Transverse colon (tissue), 4 donors: ENCODE measurements at regions of chr1 and their contacts with region 1.

Region 1: DNA sequence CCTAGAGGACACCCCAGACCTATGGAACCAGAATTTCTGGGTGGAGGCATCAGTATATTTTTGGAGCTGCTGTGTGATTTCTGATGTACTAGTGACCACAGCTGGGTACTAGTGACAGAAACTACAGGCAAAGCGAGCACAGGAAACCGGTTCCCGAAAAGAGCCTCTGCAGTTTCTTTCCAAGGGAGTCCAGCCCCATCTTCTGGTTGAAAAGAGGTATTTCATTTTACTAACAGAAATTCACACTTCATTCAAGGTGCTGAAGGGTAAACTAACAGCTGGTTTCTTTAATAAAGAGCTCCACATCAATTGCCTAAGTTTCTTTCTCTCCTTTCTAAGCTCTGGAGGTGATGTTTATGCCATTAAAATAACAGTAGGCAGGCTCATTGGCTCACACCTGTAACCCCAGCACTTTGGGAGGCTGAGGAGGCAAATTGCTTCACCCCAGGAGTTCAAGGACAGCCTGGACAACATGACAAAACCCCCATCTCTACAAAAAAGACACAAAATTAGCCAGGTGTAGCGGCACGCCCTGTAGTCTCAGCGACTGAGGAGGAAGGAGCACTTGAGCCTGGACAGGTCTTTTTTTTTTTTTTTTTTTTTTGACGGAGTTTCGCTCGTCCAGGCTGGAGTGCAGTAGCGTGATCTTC is 22.0 kb downstream of the THAP3 start:
- DNase-seq: no peak
- H3K4me3 ChIP-seq: no peak overlapping the region
- H3K27ac ChIP-seq: no peak overlapping the region
- H3K4me1 ChIP-seq: no peaks in the 10 kb centered on the region
- H3K27me3 ChIP-seq: no peaks in the 10 kb centered on the region
- CTCF ChIP-seq: peak; percentile 50 to 64 (median 58)
- EP300 ChIP-seq: no peak
- POLR2A ChIP-seq: no peak

Region 2: DNA sequence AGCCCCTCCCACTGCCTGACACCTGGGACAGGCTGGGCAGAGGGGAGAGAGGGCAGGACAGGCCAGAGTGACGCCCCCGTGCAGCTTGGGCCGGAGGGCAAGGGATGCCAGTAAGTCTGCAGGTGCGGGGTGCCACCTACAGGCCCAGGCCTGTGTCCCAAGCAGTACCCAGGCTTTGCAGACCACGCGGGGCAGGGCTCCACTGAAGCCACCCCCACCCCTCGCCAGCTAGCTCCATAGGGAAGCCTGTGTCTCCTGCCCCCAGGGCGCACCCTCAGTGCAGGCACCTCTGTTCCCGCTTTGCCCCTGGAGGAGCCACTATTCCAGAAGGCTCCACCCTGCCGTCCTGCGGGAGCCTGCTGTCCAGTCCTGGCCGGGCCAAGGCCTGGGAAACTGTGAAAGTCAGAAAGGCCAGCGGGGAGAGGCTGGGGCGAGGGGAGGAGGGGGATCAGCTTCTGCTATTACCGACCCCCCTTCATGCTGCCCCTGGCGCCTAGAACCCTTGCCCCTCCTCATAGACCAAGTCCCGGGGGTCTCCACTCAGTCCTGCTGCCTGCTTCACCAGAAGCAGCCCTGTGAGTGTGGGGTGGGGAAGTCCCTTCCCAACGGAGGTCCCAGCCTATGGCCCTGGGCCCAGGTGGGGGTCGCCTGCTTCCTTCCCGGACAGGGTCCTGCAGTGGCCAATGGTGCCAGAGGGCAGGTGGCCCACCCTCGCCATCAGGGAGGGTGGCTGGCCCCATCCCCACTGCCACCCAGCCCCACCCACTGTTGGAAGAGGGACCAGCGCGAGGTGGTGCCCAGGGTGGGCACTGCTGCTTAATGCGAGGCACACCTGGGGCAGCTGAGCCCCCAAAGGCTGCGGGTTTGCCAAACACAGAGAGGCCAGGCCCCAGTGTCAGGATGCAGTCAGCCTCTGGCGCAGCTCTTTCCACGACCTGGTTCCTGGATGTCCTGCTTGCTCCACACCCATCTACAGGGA is 546.5 kb before region 1 on chr1:
- in situ Hi-C with region 1: no loop called
- intact Hi-C with region 1: no loop called
- DNase-seq: no peak
- H3K4me3 ChIP-seq: no peak overlapping the region
- H3K27ac ChIP-seq: no peak overlapping the region
- H3K4me1 ChIP-seq: no peaks in the 10 kb centered on the region
- H3K27me3 ChIP-seq: peaks cover 31% of the 10 kb centered on the region
- CTCF ChIP-seq: no peak
- EP300 ChIP-seq: no peak
- POLR2A ChIP-seq: no peak

Region 3: GRCh38 chr1:6554031-6554906 is 92.4 kb before region 1 on chr1 and contains the start of gene NOL9:
- in situ Hi-C with region 1: no loop called
- intact Hi-C with region 1: loop called (anchors 10 kb)
- DNase-seq: peak; percentile 96
- H3K4me3 ChIP-seq: peak within 1 kb of the TSS; percentile 86 to 99 (median 94)
- H3K27ac ChIP-seq: peak within 1 kb of the TSS; percentile 84 to 87 (median 86)
- H3K4me1 ChIP-seq: peaks cover 6 to 27% (median 24%) of the 10 kb centered on the region in 4 donors
- H3K27me3 ChIP-seq: no peaks in the 10 kb centered on the region
- CTCF ChIP-seq: peak; percentile 96 to 98 (median 97)
- EP300 ChIP-seq: no peak
- POLR2A ChIP-seq: peak; percentile 26
- total RNA-seq, gene NOL9: 8.0 to 30.0 (median 13.8) TPM